Panc1 (cell line): ENCODE measurements at regions of chr14 and their contacts with region 1.

Region 1: DNA sequence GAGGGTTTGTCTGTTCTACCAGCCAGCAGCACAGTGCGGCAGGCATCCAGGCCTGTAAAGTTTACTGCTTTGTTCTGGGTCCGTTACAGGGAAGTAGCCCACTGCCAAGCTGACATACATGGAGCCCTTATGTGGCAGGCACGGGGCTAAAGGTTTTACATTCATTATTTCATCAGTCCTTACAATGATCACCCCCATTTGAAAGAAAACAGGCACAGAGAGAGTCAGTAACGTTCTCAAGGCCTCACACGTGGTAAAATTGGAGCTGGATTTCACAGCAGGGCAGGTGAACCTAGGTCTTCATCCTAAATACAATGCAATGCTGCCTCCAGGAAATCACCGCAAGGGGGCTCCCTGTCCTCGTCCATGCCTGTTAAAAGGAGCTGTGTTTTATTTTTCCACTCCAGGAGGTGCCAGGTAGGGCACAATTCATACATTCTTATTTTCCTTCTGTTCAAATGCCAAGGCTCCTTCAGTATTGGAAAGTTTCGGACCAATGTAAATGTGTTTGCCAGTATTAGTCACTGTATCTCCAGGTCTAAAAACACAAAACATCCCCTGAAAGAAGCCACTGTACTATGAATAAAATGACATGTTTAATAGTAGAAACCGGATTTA is 172.2 kb upstream of the GZMB start:
- DNase-seq: peak; percentile 28
- ATAC-seq: peak; percentile 70; the same call in 1 of the 2 replicates
- H3K4me3 ChIP-seq: no peak overlapping the region
- H3K27ac ChIP-seq: no peak overlapping the region
- H3K4me1 ChIP-seq: no peaks in the 10 kb centered on the region
- H3K27me3 ChIP-seq: no peaks in the 10 kb centered on the region
- CTCF ChIP-seq: peak; percentile 73

Region 2: GRCh38 chr14:25049568-25050268 is 243.5 kb after region 1 on chr14 and contains the start of gene STXBP6:
- CTCF ChIA-PET with region 1: no interaction called
- POLR2A ChIA-PET with region 1: no interaction called
- in situ Hi-C with region 1: no loop called
- intact Hi-C with region 1: loop called (anchors 10 kb)
- DNase-seq: no peak
- ATAC-seq: peak; percentile 80
- H3K4me3 ChIP-seq: peak within 1 kb of the TSS; percentile 29
- H3K27ac ChIP-seq: no peak within 1 kb of the TSS
- H3K4me1 ChIP-seq: no peaks in the 10 kb centered on the region
- H3K27me3 ChIP-seq: peaks cover 17% of the 10 kb centered on the region
- CTCF ChIP-seq: no peak
- total RNA-seq, gene STXBP6: not detected

Region 3: DNA sequence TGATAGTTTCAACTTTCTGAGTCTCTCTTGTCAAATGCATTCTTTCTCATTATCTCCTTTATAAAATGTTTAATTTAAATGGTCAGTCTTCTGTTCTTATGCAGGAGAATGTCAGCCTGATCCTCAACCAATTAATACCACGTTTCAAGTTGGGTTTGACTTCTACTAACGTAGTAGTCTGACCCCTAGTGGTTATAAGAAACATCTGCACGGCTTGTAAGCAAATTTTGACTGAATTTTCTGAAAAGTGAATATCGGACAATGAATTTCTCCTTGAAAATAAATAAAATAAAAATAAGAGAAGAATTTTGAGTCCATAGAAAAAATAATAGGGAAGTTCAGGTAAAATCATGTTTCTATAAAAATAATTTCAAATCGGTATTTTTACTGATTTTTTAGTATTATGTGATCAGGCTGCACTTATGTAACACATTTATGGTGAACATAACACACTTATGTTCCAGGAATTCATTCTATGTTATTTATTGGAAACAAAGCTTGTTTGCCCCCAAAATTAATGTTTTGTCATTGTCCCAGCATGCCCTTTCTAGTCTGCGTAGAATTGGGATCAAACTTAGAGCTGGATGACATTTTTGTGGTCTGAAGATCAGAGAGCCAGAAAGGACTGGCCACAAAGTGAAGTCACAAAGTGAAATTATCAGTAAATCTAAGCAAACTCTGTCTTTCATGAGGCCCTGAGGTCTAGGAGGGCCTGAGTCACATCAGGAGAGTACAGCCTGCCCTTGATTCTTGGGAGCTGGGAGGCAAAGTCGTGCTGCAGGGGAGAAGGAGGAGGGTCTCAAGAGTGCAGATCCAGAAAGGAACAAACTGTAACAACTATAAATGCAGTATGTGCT is 345.0 kb after region 1 on chr14:
- CTCF ChIA-PET with region 1: no interaction called
- POLR2A ChIA-PET with region 1: no interaction called
- in situ Hi-C with region 1: no loop called
- intact Hi-C with region 1: loop called (anchors 5 kb)
- DNase-seq: peak; percentile 15
- ATAC-seq: no peak
- H3K4me3 ChIP-seq: no peak overlapping the region
- H3K27ac ChIP-seq: no peak overlapping the region
- H3K4me1 ChIP-seq: no peaks in the 10 kb centered on the region
- H3K27me3 ChIP-seq: no peaks in the 10 kb centered on the region
- CTCF ChIP-seq: peak; percentile 66; the same call in 1 of the 2 replicates